ENCODE measurements at regions of chr1 and their contacts with region 1.

Region 1: DNA sequence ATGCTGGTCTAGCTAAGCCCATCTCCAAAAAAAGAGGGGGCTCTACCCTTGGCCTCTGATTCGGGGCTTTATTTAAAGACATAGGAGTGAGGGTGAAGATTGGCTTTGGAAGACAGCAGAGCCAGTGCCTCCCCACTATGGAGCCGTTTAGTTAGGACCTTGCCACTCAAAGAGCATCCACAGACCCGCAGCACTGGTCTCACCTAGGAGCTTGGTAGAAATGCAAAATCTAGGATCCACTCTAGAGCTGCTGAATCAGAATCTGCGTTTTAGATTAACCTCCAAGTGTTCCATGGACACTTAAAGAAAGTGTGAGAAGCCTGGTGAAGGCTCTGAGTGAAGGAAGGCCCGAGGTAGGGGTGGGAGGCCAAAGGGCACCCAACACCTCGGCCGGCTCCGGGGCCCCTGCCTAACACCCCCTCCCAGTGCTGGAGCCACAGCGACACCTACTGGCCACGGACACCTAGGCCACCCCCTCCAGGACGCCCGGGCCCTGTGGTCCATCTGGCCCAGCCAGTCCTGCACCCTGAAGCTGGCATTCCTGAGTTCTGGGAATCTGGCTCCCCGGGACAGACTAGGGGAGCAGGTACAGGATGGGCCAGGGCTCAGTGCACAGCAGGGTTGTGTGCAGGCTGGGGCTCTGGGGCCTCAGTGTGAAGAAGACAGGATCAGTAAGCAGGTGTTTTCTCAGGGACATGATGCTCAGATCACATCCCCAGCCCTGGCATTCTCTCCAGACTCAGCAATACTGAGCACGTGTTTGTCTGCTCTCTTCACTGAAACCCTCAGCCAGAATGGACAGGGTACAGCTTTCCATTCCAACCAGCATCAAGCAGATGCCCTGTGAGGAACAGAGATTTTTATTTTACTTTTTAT is 79.2 kb downstream of the TMEM53 start:
- DNase-seq: peak; percentile 94
- CTCF ChIP-seq: peak; percentile 98

Region 2: DNA sequence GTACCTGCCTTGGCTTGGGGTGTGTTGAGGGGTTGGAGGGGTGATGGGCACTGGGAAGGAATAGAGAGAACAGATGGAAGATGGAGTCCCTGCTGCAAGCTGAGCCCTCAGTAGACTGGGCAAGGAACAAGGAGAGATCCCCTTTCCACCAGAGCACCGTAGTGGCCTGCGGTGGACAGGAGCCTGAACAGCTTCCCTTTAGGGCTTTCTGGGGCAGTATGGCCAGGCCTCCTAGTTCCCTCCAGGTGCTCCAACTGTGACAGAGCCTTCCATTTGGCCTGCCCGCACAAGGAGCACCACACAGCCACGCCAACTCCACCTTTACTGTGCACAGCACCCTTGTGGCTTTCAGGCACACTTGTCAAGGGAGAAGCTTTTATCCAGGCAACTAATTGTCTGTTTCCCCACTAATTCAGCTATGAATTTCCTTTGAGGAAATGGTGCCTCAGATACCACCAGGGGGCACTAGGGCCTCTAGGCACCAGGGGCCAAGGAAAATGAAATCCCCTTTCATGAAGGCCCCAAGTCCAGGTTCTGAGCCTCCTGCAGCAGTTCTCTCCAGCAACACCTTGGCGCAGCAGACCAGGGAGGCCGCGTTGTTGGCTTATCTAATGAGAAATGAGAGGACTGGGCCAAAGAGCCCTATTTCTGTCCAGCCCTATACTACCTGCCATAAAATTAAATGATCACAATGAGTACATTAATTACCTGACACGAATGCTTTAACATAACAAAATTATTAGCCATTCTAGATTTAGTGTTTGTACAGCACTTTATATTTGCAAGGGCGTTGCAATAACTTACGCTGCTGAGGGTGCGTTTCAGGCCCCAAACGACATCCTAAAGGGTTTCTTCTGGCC is 217.0 kb before region 1 on chr1:
- in situ Hi-C with region 1: loop called (anchors 10 kb)
- DNase-seq: peak; percentile 56
- CTCF ChIP-seq: peak; percentile 50